ENCODE measurements at regions of chr4 and their contacts with region 1.

Region 1: DNA sequence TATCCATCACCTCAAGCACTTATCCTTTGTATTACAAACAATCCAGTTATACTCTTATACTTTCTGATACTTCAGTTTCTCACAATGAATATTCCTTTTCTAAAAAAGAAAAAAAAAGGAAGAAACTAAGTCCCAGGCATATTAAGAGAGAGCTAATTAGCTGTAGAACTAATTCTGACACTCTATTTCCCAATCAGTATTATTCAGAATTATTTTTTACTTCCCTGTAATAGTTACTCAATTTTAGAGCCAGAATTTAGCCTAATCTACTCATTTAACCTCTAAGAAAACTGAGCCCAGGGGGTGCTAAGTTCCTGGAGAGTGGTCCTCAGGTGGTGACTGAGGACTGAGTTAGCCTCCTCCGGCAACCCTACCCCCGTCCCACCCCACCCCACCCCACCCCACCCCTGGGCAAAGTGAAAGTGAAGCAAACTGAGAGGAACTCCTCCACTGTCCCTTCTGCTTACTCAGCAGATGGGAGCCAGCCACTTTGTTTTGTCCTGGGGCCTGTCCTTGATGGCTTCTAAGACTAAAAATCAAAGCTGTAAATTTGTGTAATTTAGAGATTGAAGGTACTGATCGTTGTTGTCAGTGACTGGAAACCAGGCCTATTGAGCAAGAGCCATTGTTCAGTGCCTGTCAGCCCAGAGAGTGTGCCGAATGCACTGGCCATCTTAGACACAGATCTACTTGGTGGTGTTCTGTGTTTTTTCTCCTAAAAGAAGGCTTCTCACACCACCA is 162.1 kb downstream of the CBR4 start:
- DNase-seq: peak; percentile 37
- H3K4me3 ChIP-seq: peak overlapping the region in 1 of 3 experiments; percentile 9
- H3K27ac ChIP-seq: peak overlapping the region; percentile 21
- H3K4me1 ChIP-seq: peaks cover 16% of the 10 kb centered on the region
- H3K27me3 ChIP-seq: no peaks in the 10 kb centered on the region
- CTCF ChIP-seq: no peak
- POLR2A ChIP-seq: no peak

Region 2: GRCh38 chr4:168612450-168613139 is 235.3 kb before region 1 on chr4:
- CTCF ChIA-PET with region 1: no interaction called
- POLR2A ChIA-PET with region 1: no interaction called
- dilution Hi-C with region 1: no loop called
- intact Hi-C with region 1: no loop called
- DNase-seq: peak; percentile 88
- H3K4me3 ChIP-seq: no peak overlapping the region
- H3K27ac ChIP-seq: peak overlapping the region; percentile 43
- H3K4me1 ChIP-seq: peaks cover 24% of the 10 kb centered on the region
- H3K27me3 ChIP-seq: no peaks in the 10 kb centered on the region
- CTCF ChIP-seq: no peak
- POLR2A ChIP-seq: no peak

Region 3: GRCh38 chr4:168868044-168868781 is 20.3 kb after region 1 on chr4:
- CTCF ChIA-PET with region 1: no interaction called
- POLR2A ChIA-PET with region 1: interaction called, 3 read pairs
- dilution Hi-C with region 1: no loop called
- intact Hi-C with region 1: loop called (anchors 1 kb)
- DNase-seq: no peak
- H3K4me3 ChIP-seq: no peak overlapping the region
- H3K27ac ChIP-seq: peak overlapping the region; percentile 67
- H3K4me1 ChIP-seq: peaks cover 19% of the 10 kb centered on the region
- H3K27me3 ChIP-seq: no peaks in the 10 kb centered on the region
- CTCF ChIP-seq: no peak
- POLR2A ChIP-seq: no peak

Region 4: GRCh38 chr4:169045862-169046584 is 198.1 kb after region 1 on chr4:
- CTCF ChIA-PET with region 1: no interaction called
- POLR2A ChIA-PET with region 1: no interaction called
- dilution Hi-C with region 1: no loop called
- intact Hi-C with region 1: no loop called
- DNase-seq: no peak
- H3K4me3 ChIP-seq: no peak overlapping the region
- H3K27ac ChIP-seq: no peak overlapping the region
- H3K4me1 ChIP-seq: peaks cover 13% of the 10 kb centered on the region
- H3K27me3 ChIP-seq: no peaks in the 10 kb centered on the region
- CTCF ChIP-seq: no peak
- POLR2A ChIP-seq: no peak